Esophagus muscularis mucosa (tissue), 4 donors: ENCODE measurements at regions of chr2 and their contacts with region 1.

Region 1: DNA sequence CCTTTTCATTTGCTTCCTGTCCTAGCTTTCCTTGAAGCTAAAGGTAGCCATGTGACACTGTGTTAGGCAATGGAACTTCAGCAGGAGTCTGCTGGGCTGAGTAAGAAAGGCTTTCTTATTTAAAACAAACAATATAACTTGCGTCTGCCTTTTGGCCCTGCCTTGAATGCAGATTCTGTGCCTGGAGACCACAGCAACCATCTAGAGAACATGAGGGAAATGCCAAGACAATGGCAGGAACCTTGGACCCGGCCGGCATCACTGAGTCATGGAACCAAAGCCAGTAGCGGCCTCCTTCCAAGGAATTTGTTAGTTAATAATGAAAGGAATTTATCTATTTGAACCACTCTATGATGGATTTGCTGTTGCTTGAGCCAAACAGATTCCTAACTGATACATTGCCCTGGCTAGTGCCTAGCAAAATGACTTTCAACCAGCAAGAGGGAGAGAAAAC is 207.5 kb upstream of the EPHA4 start:
- DNase-seq: no peak
- H3K4me3 ChIP-seq: no peak overlapping the region
- H3K27ac ChIP-seq: peak overlapping the region; percentile 62 to 84 (median 74)
- H3K4me1 ChIP-seq: peaks cover 3 to 50% (median 29%) of the 10 kb centered on the region in 4 donors
- H3K27me3 ChIP-seq: no peaks in the 10 kb centered on the region
- CTCF ChIP-seq: no peak
- EP300 ChIP-seq: no peak
- POLR2A ChIP-seq: no peak

Region 2: GRCh38 chr2:221680548-221680947 is 99.1 kb before region 1 on chr2:
- intact Hi-C with region 1: no loop called
- DNase-seq: no peak
- H3K4me3 ChIP-seq: no peak overlapping the region
- H3K27ac ChIP-seq: no peak overlapping the region
- H3K4me1 ChIP-seq: no peaks in the 10 kb centered on the region
- H3K27me3 ChIP-seq: no peaks in the 10 kb centered on the region
- CTCF ChIP-seq: no peak
- EP300 ChIP-seq: no peak
- POLR2A ChIP-seq: no peak

Region 3: DNA sequence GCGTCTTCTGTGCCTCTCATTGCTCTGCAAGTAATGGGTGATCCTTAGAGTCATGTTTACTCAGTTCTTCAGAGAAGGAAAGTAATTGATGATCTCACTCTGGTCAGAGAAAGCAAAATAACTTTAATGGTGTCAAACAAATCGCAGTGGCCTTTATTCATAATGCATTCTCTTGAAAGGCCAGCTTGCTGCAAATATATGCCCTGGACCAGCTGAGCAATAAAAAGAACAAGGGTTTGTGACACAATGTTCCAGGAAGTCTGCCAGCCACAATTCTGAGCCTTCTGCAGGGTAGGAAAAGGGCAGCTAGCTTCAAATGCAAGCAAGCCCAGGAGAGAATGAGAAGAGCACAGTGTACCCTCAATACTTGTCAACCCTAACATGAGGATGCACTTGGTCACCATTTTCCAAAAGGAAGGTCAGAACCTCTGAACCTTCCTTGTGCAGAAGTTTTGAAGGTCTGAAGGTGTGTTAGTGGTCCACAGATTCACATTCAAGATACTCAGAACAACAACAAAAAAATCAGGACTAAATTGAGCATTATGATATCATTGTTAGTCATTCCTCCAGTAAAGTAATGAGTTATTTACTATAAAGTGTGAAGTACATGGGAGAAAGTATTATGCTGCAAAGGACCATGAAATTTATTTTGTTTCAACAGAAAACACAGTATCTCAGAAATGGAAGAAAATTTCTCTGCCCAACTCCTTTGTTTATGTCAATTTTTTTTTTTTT is 163.6 kb after region 1 on chr2:
- intact Hi-C with region 1: loop called (anchors 5 kb)
- DNase-seq: no peak
- H3K4me3 ChIP-seq: no peak overlapping the region
- H3K27ac ChIP-seq: peak overlapping the region; percentile 72 to 82 (median 80)
- H3K4me1 ChIP-seq: peaks cover 3 to 70% (median 22%) of the 10 kb centered on the region in 4 donors
- H3K27me3 ChIP-seq: no peaks in the 10 kb centered on the region
- CTCF ChIP-seq: no peak
- EP300 ChIP-seq: no peak
- POLR2A ChIP-seq: no peak